ENCODE measurements at regions of chr15 and their contacts with region 1.

Region 1: DNA sequence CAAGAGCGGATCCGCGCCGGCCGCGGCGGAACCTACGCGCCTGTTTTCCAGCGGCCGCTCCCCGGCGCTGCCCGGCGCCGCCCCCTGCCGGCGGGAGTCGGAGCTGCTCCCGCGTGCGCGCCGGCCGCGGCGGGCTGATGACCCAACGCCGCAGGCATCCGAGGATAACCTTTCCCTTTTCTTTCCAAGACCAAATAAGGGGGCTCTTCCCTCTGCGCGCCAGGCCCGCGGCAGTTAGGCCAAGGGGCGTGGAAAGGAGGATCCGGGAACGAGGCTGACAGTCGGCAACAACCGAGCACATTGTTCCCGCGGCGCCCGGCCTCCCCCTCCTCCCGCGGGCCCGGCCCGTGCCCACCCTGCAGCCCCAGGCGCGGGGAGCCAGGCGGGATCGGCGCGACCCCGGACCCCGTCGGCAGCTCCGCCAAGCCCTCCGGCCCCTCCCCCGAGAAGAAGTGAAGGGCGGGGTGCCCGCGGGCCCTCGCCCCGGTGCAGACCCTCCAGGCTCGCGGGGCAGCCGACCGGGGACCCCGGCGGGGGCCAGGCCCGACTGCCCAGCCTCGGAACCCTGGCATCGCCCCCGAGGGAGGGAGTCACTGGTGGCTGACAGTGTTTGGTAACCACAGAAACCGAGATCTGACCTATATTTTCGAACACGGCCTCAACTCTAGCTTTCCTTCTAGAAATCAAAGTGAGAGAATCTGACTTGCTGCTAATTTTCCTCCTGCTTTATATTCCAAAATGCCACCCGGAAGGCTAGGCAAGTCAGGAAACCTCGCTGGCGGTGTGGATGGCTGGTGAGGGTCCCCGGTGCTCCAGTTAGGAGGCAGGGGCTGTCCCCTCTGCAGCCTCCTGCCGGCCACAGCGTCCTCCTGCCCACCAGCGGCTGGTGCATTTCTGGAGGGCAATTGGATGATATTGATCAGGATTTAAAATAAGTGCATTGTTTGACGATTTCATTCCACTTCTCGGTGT is 45.6 kb upstream of the SYNM start:
- DNase-seq: peak; percentile 75 to 85
- ATAC-seq: peak; percentile 74 to 96 (median 87)
- H3K4me3 ChIP-seq: peak overlapping the region; percentile 30 to 65 (median 58)
- H3K27ac ChIP-seq: peak overlapping the region; percentile 43 to 91 (median 80)
- H3K4me1 ChIP-seq: peaks cover 5 to 30% (median 19%) of the 10 kb centered on the region in 9 donors
- H3K27me3 ChIP-seq: peaks cover 0 to 35% (median 0%) of the 10 kb centered on the region in 7 donors
- CTCF ChIP-seq: peak; percentile 62 to 84 (median 81)

Region 2: GRCh38 chr15:98785807-98786621 is 273.3 kb before region 1 on chr15:
- intact Hi-C with region 1: loop called in 3 of 10 experiments (anchors 5 to 10 kb)
- DNase-seq: peak in 1 of 2 donors; percentile 38
- ATAC-seq: peak; percentile 41 to 90 (median 81)
- H3K4me3 ChIP-seq: no peak overlapping the region
- H3K27ac ChIP-seq: peak overlapping the region in 6 of 10 donors; percentile 24 to 65 (median 44)
- H3K4me1 ChIP-seq: peaks cover 6 to 62% (median 46%) of the 10 kb centered on the region in 9 donors
- H3K27me3 ChIP-seq: no peaks in the 10 kb centered on the region
- CTCF ChIP-seq: peak in 1 of 9 donors; percentile 5

Region 3: GRCh38 chr15:98874773-98875172 is 184.5 kb before region 1 on chr15:
- intact Hi-C with region 1: loop called in 1 of 10 experiments (anchors 5 kb)
- DNase-seq: no peak
- ATAC-seq: peak in 2 of 8 donors; percentile 7 to 18
- H3K4me3 ChIP-seq: peak overlapping the region in 1 of 10 donors; percentile 12
- H3K27ac ChIP-seq: peak overlapping the region in 7 of 10 donors; percentile 3 to 81 (median 59)
- H3K4me1 ChIP-seq: peaks cover 13 to 89% (median 61%) of the 10 kb centered on the region in 9 donors
- H3K27me3 ChIP-seq: no peaks in the 10 kb centered on the region
- CTCF ChIP-seq: no peak

Region 4: GRCh38 chr15:98943601-98944151 is 115.6 kb before region 1 on chr15:
- intact Hi-C with region 1: loop called in 2 of 10 experiments (anchors 5 to 10 kb)
- DNase-seq: peak; percentile 48 to 80
- ATAC-seq: peak; percentile 75 to 91 (median 84)
- H3K4me3 ChIP-seq: no peak overlapping the region
- H3K27ac ChIP-seq: peak overlapping the region in 9 of 10 donors; percentile 31 to 85 (median 53)
- H3K4me1 ChIP-seq: peaks cover 2 to 57% (median 28%) of the 10 kb centered on the region in 9 donors
- H3K27me3 ChIP-seq: no peaks in the 10 kb centered on the region
- CTCF ChIP-seq: no peak

Region 5: DNA sequence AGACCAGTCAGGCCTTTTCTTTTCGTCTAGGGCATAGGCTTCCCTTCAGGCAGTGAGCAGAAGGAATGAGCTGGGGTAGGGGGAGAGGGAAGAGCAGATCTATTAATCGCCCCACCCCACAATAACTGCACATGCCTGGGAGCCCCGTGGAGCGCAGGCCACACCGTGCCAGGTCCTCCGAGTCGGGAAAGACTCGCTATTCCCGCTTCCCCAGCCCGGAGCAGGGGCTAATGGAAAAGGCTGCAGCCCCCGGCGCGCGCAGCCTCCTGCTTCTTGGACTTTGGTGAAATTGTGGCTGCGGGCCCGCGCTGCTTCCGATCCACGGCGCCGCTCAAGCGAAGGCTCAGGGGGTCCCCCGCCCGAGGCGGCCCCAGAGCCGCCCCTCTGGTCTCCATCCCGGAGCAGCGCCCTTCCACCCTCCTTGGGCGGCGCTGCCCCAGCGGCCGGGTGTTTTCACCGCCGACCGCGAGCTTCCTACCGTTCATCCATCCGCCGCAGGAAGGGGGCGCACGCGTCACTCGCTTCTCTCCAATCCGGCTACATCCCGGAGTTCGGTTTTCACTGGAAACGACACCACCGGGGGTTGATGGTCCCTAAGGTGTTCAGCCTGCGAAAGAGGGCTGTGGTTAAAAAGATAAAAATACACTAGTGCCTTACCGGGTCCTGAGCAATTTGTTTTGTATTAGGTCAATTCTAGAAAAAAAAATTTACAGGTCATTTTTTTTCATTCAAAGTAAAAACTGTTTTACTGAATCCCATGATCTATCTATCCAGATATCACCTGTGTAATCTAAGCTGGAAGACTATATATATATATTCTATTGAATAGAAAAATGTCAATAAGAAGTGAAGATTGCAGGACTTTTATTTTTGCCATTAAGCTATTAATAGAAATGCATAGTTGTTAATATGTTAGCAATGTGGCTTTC is 41.2 kb after region 1 on chr15:
- intact Hi-C with region 1: no loop called
- DNase-seq: peak; percentile 84 to 85
- ATAC-seq: peak in 6 of 8 donors; percentile 43 to 70 (median 59)
- H3K4me3 ChIP-seq: peak overlapping the region in 9 of 10 donors; percentile 20 to 54 (median 45)
- H3K27ac ChIP-seq: no peak overlapping the region
- H3K4me1 ChIP-seq: peaks cover 0 to 12% (median 7%) of the 10 kb centered on the region in 9 donors
- H3K27me3 ChIP-seq: peaks cover 0 to 53% (median 17%) of the 10 kb centered on the region in 7 donors
- CTCF ChIP-seq: peak; percentile 68 to 92 (median 82)